Naive thymus-derived CD4-positive, alpha-beta T cell (primary cell): ENCODE measurements at regions of chr6 and their contacts with region 1.

Region 1: DNA sequence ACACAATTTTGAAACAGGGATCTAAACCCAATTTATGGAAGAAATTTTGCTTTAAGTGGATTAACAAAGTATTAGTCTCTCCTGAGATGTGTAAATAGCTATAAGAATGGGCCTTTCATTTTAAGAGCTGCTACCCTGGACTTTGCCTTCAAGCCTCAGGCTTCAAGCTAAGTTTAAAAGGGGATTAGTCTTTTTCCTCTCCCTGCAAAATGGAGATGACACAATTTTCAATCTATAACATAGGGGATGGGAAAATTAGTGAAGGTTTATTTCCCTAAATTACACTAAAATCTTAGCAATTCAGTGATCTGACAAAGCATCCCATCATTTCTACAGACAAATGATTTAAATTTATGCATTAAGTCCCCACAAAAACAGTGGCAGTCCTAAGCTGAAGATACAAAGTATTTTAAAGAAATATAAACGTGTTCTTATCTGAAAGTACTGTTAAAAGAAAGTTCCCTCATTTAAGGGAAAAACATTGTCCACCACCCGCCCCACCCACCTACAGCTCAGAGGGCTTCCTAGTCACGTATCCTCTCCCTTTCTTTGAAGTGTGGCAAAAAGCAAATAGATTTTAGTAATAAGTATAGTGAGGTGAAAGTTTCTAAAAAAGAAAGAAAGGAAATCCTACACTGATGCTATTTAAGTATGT is 14.5 kb downstream of the ARHGAP18 start:
- DNase-seq: no peak
- ATAC-seq: no peak
- H3K4me3 ChIP-seq: no peak overlapping the region
- H3K4me3 Mint-ChIP-seq: peak overlapping the region in 1 of 10 donors; percentile 75
- H3K27ac ChIP-seq: no peak overlapping the region
- H3K27ac Mint-ChIP-seq: peak overlapping the region in 8 of 9 donors; percentile 3 to 87 (median 26)
- H3K4me1 ChIP-seq: peaks cover 10% of the 10 kb centered on the region in 2 donors
- H3K4me1 Mint-ChIP-seq: peaks cover 0 to 65% (median 13%) of the 10 kb centered on the region in 7 donors
- H3K27me3 ChIP-seq: no peaks in the 10 kb centered on the region
- H3K27me3 Mint-ChIP-seq: no peaks in the 10 kb centered on the region

Region 2: GRCh38 chr6:129709769-129710449 is 14.4 kb after region 1 on chr6 and contains the start of gene ARHGAP18:
- CTCF ChIA-PET with region 1: interaction called, 3 read pairs
- POLR2A ChIA-PET with region 1: interaction called, 7 read pairs
- intact Hi-C with region 1: loop called in 1 of 2 experiments (anchors 1 kb)
- DNase-seq: peak; percentile 40 to 69 (median 49)
- ATAC-seq: peak; percentile 95
- H3K4me3 ChIP-seq: peak within 1 kb of the TSS; percentile 66
- H3K4me3 Mint-ChIP-seq: peak within 1 kb of the TSS; percentile 90 to 99 (median 94)
- H3K27ac ChIP-seq: peak within 1 kb of the TSS; percentile 37
- H3K27ac Mint-ChIP-seq: peak within 1 kb of the TSS; percentile 53 to 93 (median 83)
- H3K4me1 ChIP-seq: peaks cover 0 to 8% of the 10 kb centered on the region in 2 donors
- H3K4me1 Mint-ChIP-seq: peaks cover 21 to 43% (median 30%) of the 10 kb centered on the region in 7 donors
- H3K27me3 ChIP-seq: no peaks in the 10 kb centered on the region
- H3K27me3 Mint-ChIP-seq: peaks cover 0 to 2% (median 0%) of the 10 kb centered on the region in 5 donors
- total RNA-seq, gene ARHGAP18: 1.1 to 9.4 (median 2.0) TPM